ENCODE measurements at regions of chrX and their contacts with region 1.

Region 1: GRCh38 chrX:31036895-31037294 is 34.9 kb downstream of the FTHL17 start:
- DNase-seq: peak; percentile 26
- ATAC-seq: peak; percentile 39
- H3K4me3 ChIP-seq: no peak overlapping the region
- H3K4me3 Mint-ChIP-seq: no peak overlapping the region
- H3K27ac ChIP-seq: no peak overlapping the region
- H3K27ac Mint-ChIP-seq: no peak overlapping the region
- H3K4me1 ChIP-seq: no peaks in the 10 kb centered on the region
- H3K4me1 Mint-ChIP-seq: no peaks in the 10 kb centered on the region
- H3K27me3 ChIP-seq: no peaks in the 10 kb centered on the region
- H3K27me3 Mint-ChIP-seq: peaks cover 12% of the 10 kb centered on the region
- CTCF ChIP-seq: peak; percentile 63

Region 2: DNA sequence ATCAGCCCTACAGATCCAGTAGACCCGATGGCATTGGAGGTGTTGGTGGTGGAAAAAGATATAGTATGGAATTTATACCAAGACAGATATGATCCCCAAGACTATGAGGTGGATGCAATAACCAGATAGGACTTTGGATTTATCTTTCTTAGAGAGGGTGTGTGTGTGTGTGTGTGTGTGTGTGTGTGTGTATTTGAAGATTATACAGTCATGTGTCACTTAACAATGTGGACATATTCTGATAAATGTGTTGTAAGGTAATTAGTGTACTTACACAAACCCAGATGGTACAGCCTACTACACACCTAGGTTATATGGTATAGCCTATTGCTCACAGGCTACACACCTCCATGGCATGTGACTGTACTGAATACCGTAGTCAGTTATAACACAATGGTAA is 123.4 kb before region 1 on chrX:
- CTCF ChIA-PET with region 1: no interaction called
- POLR2A ChIA-PET with region 1: no interaction called
- intact Hi-C with region 1: no loop called
- DNase-seq: no peak
- ATAC-seq: no peak
- H3K4me3 ChIP-seq: no peak overlapping the region
- H3K4me3 Mint-ChIP-seq: no peak overlapping the region
- H3K27ac ChIP-seq: no peak overlapping the region
- H3K27ac Mint-ChIP-seq: no peak overlapping the region
- H3K4me1 ChIP-seq: peaks cover 0 to 4% of the 10 kb centered on the region in 2 donors
- H3K4me1 Mint-ChIP-seq: peaks cover 9% of the 10 kb centered on the region
- H3K27me3 ChIP-seq: no peaks in the 10 kb centered on the region
- H3K27me3 Mint-ChIP-seq: no peaks in the 10 kb centered on the region
- CTCF ChIP-seq: no peak

Region 3: GRCh38 chrX:31110657-31111056 is 73.8 kb after region 1 on chrX:
- CTCF ChIA-PET with region 1: no interaction called
- POLR2A ChIA-PET with region 1: no interaction called
- intact Hi-C with region 1: no loop called
- DNase-seq: no peak
- ATAC-seq: no peak
- H3K4me3 ChIP-seq: no peak overlapping the region
- H3K4me3 Mint-ChIP-seq: no peak overlapping the region
- H3K27ac ChIP-seq: no peak overlapping the region
- H3K27ac Mint-ChIP-seq: no peak overlapping the region
- H3K4me1 ChIP-seq: no peaks in the 10 kb centered on the region
- H3K4me1 Mint-ChIP-seq: no peaks in the 10 kb centered on the region
- H3K27me3 ChIP-seq: no peaks in the 10 kb centered on the region
- H3K27me3 Mint-ChIP-seq: no peaks in the 10 kb centered on the region
- CTCF ChIP-seq: no peak

Region 4: DNA sequence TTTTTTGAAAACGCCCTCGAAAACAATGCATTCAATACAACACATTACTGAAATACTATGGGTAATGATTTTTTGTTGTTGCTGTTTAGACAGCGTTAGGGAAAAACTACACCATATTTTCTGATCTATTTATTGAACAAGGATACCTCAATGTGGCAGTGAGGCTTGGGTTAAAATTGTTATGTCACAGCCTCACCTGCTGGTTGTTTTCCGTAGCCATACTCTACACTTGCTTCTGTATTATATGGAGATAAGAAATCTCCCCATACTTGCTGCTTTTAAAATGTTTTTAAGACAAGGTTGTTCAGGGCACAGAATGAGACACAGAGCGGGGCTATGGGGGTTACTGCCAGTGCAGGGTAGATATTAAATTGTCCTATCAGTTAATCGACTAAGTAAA is 256.5 kb after region 1 on chrX:
- CTCF ChIA-PET with region 1: interaction called, 121 read pairs
- POLR2A ChIA-PET with region 1: interaction called, 4 read pairs
- intact Hi-C with region 1: loop called (anchors 1 kb)
- DNase-seq: peak; percentile 46
- ATAC-seq: peak; percentile 72
- H3K4me3 ChIP-seq: no peak overlapping the region
- H3K4me3 Mint-ChIP-seq: no peak overlapping the region
- H3K27ac ChIP-seq: no peak overlapping the region
- H3K27ac Mint-ChIP-seq: no peak overlapping the region
- H3K4me1 ChIP-seq: no peaks in the 10 kb centered on the region
- H3K4me1 Mint-ChIP-seq: no peaks in the 10 kb centered on the region
- H3K27me3 ChIP-seq: no peaks in the 10 kb centered on the region
- H3K27me3 Mint-ChIP-seq: no peaks in the 10 kb centered on the region
- CTCF ChIP-seq: peak; percentile 50

Region 5: GRCh38 chrX:31349515-31349914 is 312.6 kb after region 1 on chrX:
- CTCF ChIA-PET with region 1: no interaction called
- POLR2A ChIA-PET with region 1: no interaction called
- intact Hi-C with region 1: no loop called
- DNase-seq: no peak
- ATAC-seq: no peak
- H3K4me3 ChIP-seq: no peak overlapping the region
- H3K4me3 Mint-ChIP-seq: no peak overlapping the region
- H3K27ac ChIP-seq: no peak overlapping the region
- H3K27ac Mint-ChIP-seq: no peak overlapping the region
- H3K4me1 ChIP-seq: no peaks in the 10 kb centered on the region
- H3K4me1 Mint-ChIP-seq: no peaks in the 10 kb centered on the region
- H3K27me3 ChIP-seq: no peaks in the 10 kb centered on the region
- H3K27me3 Mint-ChIP-seq: no peaks in the 10 kb centered on the region
- CTCF ChIP-seq: no peak

Region 6: DNA sequence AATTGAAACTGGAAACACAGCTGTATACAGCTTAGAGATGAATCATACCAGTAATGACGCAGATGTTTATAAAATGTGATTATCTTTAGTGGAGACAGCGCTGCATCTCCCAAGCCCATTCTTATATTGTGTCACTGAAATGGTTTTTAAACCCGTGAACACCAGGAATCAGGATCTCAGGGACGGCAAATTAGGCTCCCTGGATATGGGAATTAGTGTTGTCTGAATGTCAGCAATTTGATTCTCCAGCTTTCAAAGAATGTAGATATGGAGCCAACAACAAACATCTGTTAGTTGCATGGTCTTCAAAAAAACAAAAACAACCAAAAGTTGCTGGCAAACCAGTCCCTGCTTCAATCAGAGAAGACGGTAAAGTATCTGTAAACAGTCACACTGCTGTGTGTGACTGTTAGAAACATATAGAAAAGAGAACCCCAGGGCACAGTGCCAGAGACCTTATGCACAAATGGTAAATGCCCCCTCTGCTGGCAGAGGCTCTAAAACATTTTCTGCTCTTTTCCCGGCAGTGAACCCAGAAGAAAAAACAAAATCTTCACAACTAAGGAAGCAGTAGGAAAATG is 386.8 kb after region 1 on chrX:
- CTCF ChIA-PET with region 1: interaction called, 13 read pairs
- POLR2A ChIA-PET with region 1: no interaction called
- intact Hi-C with region 1: loop called (anchors 1 kb)
- DNase-seq: peak; percentile 12
- ATAC-seq: no peak
- H3K4me3 ChIP-seq: no peak overlapping the region
- H3K4me3 Mint-ChIP-seq: no peak overlapping the region
- H3K27ac ChIP-seq: no peak overlapping the region
- H3K27ac Mint-ChIP-seq: no peak overlapping the region
- H3K4me1 ChIP-seq: no peaks in the 10 kb centered on the region
- H3K4me1 Mint-ChIP-seq: peaks cover 7% of the 10 kb centered on the region
- H3K27me3 ChIP-seq: no peaks in the 10 kb centered on the region
- H3K27me3 Mint-ChIP-seq: no peaks in the 10 kb centered on the region
- CTCF ChIP-seq: no peak

Region 7: DNA sequence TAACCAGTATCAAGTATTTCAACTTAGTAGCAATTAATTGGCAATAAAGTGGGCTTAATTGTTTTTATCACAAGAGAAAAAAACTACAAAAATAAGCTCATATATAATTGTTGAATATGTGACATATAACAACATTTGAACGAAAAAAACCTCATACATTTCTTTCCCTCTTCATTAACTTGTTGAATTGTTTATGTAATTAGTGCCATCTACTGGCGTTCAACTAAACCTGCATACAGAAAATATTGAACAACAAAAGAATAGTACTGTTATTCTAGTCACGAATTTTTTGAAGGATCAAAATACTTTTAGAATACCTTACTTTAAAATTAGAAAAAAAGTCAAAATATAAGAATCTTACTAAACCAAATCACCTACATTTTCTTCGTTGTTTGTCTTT is 621.5 kb after region 1 on chrX:
- CTCF ChIA-PET with region 1: interaction called, 58 read pairs
- POLR2A ChIA-PET with region 1: no interaction called
- intact Hi-C with region 1: no loop called
- DNase-seq: peak; percentile 2
- ATAC-seq: no peak
- H3K4me3 ChIP-seq: no peak overlapping the region
- H3K4me3 Mint-ChIP-seq: no peak overlapping the region
- H3K27ac ChIP-seq: no peak overlapping the region
- H3K27ac Mint-ChIP-seq: no peak overlapping the region
- H3K4me1 ChIP-seq: no peaks in the 10 kb centered on the region
- H3K4me1 Mint-ChIP-seq: no peaks in the 10 kb centered on the region
- H3K27me3 ChIP-seq: no peaks in the 10 kb centered on the region
- H3K27me3 Mint-ChIP-seq: no peaks in the 10 kb centered on the region
- CTCF ChIP-seq: peak; percentile 34